SK-N-SH (cell line): ENCODE measurements at regions of chr17 and their contacts with region 1.

Region 1: GRCh38 chr17:66704858-66705520 is 129.9 kb upstream of the CACNG5 start:
- DNase-seq: no peak
- H3K4me3 ChIP-seq: no peak overlapping the region
- H3K27ac ChIP-seq: peak overlapping the region in 1 of 2 experiments; percentile 68; a peak in 2 of 4 replicates
- H3K4me1 ChIP-seq: peaks cover 0 to 20% of the 10 kb centered on the region in 2 experiments; a peak in 2 of 4 replicates
- H3K27me3 ChIP-seq: no peaks in the 10 kb centered on the region
- CTCF ChIP-seq: no peak
- EP300 ChIP-seq: no peak
- RAD21 ChIP-seq: no peak

Region 2: DNA sequence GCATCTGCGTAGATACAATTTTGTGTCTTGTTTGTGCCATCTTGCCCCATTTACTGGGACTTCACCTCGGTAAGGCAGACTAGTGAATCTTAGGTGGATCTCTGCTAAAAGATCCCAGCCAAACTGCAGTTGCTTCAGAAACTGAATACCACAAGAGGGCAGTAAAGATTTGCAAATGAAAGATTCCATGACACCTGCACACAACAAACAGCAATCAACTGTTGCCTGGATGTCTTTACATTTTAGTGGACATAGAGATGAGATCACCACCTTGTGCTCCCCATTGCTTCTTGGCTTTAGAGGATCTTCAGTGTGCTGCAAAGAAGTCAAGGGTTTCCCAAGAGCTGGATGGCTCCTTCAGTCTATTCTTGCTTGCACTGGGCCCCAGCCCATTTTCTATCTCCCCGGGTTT is 10.8 kb after region 1 on chr17:
- CTCF ChIA-PET with region 1: interaction called, 16 read pairs
- POLR2A ChIA-PET with region 1: no interaction called
- DNase-seq: peak; percentile 74
- H3K4me3 ChIP-seq: no peak overlapping the region
- H3K27ac ChIP-seq: no peak overlapping the region
- H3K4me1 ChIP-seq: peaks cover 0 to 22% of the 10 kb centered on the region in 2 experiments; a peak in 1 of 4 replicates
- H3K27me3 ChIP-seq: no peaks in the 10 kb centered on the region
- CTCF ChIP-seq: peak; percentile 82
- EP300 ChIP-seq: peak in 1 of 2 experiments; percentile 16; a peak in 1 of 4 replicates
- RAD21 ChIP-seq: peak; percentile 98